Brain microvascular endothelial cell (primary cell): ENCODE measurements at regions of chr9 and their contacts with region 1.

Region 1: GRCh38 chr9:114738581-114739316 is 56.8 kb upstream of the TEX48 start:
- DNase-seq: peak; percentile 83
- H3K4me3 ChIP-seq: no peak overlapping the region
- H3K27ac ChIP-seq: no peak overlapping the region
- H3K27me3 ChIP-seq: no peaks in the 10 kb centered on the region
- CTCF ChIP-seq: peak; percentile 86

Region 2: GRCh38 chr9:114549697-114550330 is 188.9 kb before region 1 on chr9:
- in situ Hi-C with region 1: no loop called
- DNase-seq: no peak
- H3K4me3 ChIP-seq: no peak overlapping the region
- H3K27ac ChIP-seq: no peak overlapping the region
- H3K27me3 ChIP-seq: peaks cover 5% of the 10 kb centered on the region
- CTCF ChIP-seq: no peak

Region 3: DNA sequence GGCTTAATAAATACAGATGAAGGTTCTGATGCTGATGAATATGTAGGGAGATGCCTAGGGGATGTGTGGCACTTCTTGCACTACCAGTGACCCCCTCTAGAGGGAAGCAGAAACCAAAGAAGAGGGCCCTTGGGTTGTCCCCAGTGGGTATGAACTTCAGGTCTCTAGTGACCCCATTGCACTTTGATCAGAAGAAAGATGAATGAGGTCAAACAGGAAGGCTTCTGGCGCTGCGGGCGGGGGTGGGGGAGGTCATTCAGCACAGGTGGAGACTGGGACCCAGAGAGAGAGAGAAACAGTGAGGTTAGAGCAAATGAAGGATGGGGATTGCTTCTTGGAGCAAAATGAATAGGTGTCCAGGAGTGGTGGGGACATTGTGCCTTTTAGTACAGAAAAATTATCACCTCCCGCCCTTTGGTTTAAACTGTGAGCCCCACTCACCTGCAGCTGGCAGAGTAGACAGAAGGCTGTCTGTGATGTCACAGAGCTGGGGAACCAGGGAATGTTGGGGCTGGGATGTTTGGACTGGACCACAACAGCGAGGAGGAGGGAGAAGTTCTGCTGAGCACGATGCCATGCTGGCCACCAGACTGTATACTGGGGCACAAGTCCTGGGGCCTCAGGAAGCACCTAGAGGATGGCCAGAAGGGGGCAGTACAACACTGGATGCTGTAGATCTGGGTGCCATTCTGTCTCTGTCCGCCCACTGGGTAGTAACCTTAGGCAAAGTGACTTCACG is 57.0 kb before region 1 on chr9 and contains the start of gene TEX48:
- in situ Hi-C with region 1: loop called (anchors 10 kb)
- DNase-seq: peak; percentile 63
- H3K4me3 ChIP-seq: no peak within 1 kb of the TSS
- H3K27ac ChIP-seq: no peak within 1 kb of the TSS
- H3K27me3 ChIP-seq: no peaks in the 10 kb centered on the region
- CTCF ChIP-seq: peak; percentile 89

Region 4: DNA sequence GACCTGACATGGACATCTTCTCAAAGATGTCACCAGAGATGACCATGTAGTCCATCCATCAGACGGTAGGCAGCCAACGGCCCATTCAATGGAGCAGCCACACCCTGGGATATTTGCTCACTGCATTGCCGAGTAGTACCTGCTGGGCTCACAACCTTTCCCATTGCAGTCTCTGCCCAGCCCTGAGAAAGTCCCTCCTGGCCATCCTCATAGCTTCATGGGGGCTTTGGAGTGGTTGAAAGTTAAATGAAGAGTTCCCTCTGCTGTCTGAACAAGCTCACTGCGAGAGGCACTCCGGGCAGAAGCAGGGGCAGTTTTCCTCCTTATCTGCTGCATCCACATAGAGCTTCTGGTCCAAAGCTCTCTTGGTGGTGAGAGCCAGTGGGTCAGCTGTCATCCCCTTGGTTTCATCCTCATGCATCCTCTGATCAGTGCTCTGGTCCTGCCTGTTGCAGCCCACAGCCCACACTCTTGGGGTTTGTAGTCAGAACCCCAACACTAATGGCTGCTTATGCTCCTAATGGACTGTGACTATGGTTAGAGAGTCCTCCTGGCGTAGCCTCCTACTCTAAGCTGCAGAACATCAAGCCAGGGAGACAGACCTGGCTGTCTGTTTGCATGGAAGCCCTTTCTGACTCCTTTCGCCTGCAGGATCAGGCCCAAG is 168.3 kb after region 1 on chr9:
- in situ Hi-C with region 1: loop called (anchors 25 kb)
- DNase-seq: no peak
- H3K4me3 ChIP-seq: no peak overlapping the region
- H3K27ac ChIP-seq: no peak overlapping the region
- H3K27me3 ChIP-seq: no peaks in the 10 kb centered on the region
- CTCF ChIP-seq: peak; percentile 87